ENCODE measurements at regions of chr2 and their contacts with region 1.

Region 1: DNA sequence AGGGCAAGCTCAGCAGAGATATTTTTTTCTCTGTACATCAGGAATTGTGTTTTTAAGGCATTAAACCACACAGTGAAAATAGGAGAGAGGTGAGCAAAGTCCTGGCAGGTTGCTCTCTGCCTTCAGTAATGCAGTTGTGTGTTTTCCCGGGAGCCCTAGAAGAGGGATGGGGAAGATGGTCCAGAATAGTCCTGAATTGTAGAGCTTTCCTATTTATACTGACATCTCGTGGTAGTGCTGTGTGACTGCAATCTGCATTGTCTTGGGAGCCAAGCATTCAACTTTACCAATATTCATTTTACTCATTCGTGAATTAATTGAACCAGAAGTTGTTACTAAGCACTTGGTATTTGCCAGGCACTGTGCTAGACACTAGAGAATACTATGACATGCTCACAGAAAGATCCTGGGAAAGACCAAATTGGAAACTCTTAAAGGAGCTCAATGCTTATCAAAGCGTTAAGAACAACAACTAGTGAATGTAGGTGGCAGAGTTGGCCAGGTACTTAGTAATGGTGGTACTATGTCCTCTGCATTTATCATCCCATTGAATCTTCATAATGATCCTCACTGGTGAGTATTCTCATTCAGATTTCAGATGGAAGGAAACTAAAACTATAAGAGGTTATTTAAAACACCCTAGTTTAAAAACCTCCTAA is 214.6 kb downstream of the TRIB2 start:
- DNase-seq: no peak
- ATAC-seq: peak; percentile 86 to 90

Region 2: DNA sequence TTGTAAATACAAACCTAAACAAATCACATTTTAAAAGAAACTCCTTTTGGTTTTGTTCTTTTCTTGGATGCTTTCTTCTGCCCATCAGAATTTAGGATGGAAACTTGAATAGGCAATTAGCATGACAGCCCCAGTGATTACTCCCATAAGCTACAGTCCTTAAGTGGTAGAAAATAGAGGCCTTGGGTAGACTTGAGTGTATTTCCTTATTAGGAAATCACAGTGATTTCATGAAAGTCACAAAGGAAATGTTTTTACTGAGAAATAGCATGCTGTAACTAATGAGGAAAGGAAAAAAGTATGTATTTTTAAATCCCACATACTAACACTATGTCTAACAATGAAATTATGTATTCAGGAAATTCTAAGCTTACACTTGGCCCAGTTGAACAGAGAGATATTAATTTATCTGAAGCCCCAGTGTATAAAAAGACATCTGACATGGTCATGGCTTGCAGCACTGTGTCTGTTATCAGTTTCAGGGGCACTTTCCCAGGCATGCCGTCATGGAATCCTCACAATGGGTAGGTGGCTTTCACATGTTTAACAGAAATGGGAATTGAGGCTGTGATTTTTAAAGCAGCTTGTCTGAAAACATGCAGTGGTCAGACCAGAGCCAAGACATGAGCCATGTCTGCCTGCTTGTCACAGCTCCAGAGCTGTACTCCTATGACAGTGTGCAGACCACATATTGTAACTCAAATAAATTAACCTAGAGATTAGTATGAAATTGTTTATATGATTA is 294.3 kb before region 1 on chr2:
- intact Hi-C with region 1: no loop called
- DNase-seq: peak; percentile 19
- ATAC-seq: peak; percentile 34 to 73

Region 3: GRCh38 chr2:13000664-13001363 is 69.5 kb after region 1 on chr2:
- intact Hi-C with region 1: loop called in 1 of 2 experiments (anchors 5 kb)
- DNase-seq: peak; percentile 49
- ATAC-seq: peak; percentile 38 to 83